MCF 10A (cell line): ENCODE measurements at regions of chr4 and their contacts with region 1.

Region 1: DNA sequence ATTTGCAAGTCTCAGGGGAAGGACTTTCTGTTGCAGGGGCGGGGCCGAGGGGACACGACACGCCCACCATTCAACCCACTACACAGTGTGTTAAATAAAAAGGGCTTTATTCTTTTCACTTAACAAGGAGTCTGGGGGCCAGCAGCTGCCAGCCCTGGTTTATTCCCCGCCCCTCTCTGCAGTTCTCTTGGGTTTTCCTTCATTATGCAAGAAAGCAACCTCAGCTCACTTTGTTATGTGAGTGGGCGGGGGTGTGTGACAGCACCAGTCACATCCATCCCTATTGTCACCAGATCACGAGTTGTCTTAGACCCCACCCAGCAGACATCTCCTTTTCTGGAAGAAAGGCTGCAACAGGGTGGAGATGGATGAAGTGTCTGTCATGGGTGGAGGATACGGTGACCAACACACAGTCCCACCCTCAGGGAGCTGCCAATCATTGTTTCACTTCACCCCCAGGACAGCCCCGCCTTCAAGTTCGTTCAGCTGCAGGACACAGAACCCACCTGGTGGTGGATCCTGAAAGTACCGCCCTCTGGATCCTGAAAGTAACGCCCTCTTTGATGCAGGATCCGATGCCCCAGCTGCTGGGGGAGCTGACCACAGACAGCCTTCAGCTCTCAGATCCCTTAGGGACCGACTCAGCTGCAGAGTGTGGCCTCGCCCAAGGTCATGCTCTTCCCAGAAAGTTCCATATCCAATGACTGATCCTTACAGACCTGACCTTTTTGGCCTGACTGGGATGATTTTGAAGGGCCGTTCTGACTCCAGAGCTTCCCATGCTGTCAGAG is 79.6 kb downstream of the SMIM20 start:
- DNase-seq: peak; percentile 17
- H3K4me3 Mint-ChIP-seq: no peak overlapping the region
- H3K27ac Mint-ChIP-seq: no peak overlapping the region
- H3K4me1 Mint-ChIP-seq: peaks cover 7% of the 10 kb centered on the region
- H3K27me3 Mint-ChIP-seq: no peaks in the 10 kb centered on the region
- CTCF ChIP-seq: peak; percentile 14

Region 2: GRCh38 chr4:25783943-25784342 is 209.6 kb before region 1 on chr4:
- CTCF ChIA-PET with region 1: no interaction called
- POLR2A ChIA-PET with region 1: no interaction called
- intact Hi-C with region 1: no loop called
- DNase-seq: no peak
- H3K4me3 Mint-ChIP-seq: no peak overlapping the region
- H3K27ac Mint-ChIP-seq: no peak overlapping the region
- H3K4me1 Mint-ChIP-seq: no peaks in the 10 kb centered on the region
- H3K27me3 Mint-ChIP-seq: no peaks in the 10 kb centered on the region
- CTCF ChIP-seq: no peak

Region 3: DNA sequence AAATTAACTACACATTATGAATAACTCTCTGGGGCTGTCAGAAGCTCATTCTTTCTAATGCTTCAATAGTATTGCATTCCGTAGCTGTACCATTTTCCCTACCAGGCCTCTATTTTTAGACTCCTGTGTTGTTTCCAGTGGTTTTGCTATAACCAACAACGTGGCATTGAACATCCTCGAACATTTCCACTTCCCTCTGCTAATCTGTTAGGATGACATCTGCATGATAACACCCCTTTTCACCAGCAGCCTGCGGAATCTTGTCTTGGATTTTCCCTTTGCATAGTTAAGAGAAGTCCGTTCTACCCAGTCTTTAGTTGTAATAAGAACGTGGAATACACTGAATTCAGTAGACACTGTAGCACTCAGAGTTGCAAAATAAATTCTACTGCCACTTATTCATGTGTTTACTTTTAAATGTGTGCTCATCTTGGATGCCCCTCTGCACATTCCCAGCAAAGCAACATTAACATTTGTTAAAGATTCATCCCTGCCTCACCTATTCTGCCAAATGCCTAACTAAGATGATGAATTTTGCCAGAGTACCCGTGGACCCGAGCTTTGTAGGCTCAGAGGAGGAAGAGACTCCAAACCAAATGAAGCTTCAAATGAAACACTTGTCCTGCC is 186.4 kb before region 1 on chr4:
- CTCF ChIA-PET with region 1: no interaction called
- POLR2A ChIA-PET with region 1: no interaction called
- intact Hi-C with region 1: no loop called
- DNase-seq: no peak
- H3K4me3 Mint-ChIP-seq: no peak overlapping the region
- H3K27ac Mint-ChIP-seq: no peak overlapping the region
- H3K4me1 Mint-ChIP-seq: no peaks in the 10 kb centered on the region
- H3K27me3 Mint-ChIP-seq: no peaks in the 10 kb centered on the region
- CTCF ChIP-seq: no peak

Region 4: DNA sequence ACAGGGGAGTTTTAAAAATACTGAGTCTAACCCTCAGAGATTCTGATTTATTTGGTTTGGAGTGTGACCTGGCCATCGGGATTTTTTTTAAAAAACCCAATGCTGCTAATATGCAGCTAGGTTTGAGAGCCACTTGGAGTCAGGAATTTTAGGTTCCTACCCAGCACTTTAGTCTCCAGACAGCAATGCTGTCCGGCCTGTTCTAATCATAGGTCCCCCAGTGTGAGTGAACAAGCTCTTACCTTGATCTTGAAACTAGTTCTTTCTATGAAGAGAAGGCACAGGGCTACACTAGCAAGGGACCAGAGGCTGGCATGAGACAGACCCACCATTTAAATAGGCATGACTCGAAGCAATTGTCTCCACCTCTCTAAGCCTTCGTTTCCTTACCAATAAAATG is 23.9 kb after region 1 on chr4:
- CTCF ChIA-PET with region 1: interaction called, 15 read pairs
- POLR2A ChIA-PET with region 1: interaction called, 3 read pairs
- intact Hi-C with region 1: no loop called
- DNase-seq: no peak
- H3K4me3 Mint-ChIP-seq: no peak overlapping the region
- H3K27ac Mint-ChIP-seq: no peak overlapping the region
- H3K4me1 Mint-ChIP-seq: peaks cover 30% of the 10 kb centered on the region
- H3K27me3 Mint-ChIP-seq: peaks cover 21% of the 10 kb centered on the region
- CTCF ChIP-seq: no peak

Region 5: GRCh38 chr4:26206339-26206738 is 212.7 kb after region 1 on chr4:
- CTCF ChIA-PET with region 1: no interaction called
- POLR2A ChIA-PET with region 1: no interaction called
- intact Hi-C with region 1: no loop called
- DNase-seq: peak; percentile 74
- H3K4me3 Mint-ChIP-seq: no peak overlapping the region
- H3K27ac Mint-ChIP-seq: no peak overlapping the region
- H3K4me1 Mint-ChIP-seq: peaks cover 15% of the 10 kb centered on the region
- H3K27me3 Mint-ChIP-seq: peaks cover 31% of the 10 kb centered on the region
- CTCF ChIP-seq: no peak

Region 6: DNA sequence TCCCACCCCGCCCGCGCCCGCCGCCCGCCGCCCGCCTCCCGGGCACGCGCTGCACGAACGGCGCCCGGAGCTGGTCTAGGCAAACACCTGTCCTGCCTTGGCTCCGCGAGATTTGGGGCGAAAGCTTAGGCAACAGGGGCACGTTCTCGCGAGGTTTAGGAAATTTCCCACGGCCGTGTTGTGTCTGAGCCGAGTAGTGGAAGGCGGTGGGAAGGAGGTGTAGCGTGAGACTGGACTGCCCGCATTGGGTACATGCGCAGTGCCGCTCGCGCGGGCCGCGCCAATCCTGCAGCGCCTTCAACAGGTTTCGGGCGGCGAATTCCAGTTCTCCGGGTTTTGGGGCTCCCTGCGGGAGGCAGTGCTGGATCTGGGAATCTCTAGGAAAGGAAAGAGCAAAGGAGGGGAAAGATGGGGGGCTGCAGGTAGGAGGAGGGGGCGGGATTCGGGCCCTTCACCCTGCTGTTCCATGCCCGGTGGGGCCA is 325.9 kb after region 1 on chr4:
- CTCF ChIA-PET with region 1: interaction called, 95 read pairs
- POLR2A ChIA-PET with region 1: no interaction called
- intact Hi-C with region 1: no loop called
- DNase-seq: peak; percentile 100
- H3K4me3 Mint-ChIP-seq: peak overlapping the region; percentile 87
- H3K27ac Mint-ChIP-seq: peak overlapping the region; percentile 94
- H3K4me1 Mint-ChIP-seq: peaks cover 16% of the 10 kb centered on the region
- H3K27me3 Mint-ChIP-seq: no peaks in the 10 kb centered on the region
- CTCF ChIP-seq: no peak

Region 7: DNA sequence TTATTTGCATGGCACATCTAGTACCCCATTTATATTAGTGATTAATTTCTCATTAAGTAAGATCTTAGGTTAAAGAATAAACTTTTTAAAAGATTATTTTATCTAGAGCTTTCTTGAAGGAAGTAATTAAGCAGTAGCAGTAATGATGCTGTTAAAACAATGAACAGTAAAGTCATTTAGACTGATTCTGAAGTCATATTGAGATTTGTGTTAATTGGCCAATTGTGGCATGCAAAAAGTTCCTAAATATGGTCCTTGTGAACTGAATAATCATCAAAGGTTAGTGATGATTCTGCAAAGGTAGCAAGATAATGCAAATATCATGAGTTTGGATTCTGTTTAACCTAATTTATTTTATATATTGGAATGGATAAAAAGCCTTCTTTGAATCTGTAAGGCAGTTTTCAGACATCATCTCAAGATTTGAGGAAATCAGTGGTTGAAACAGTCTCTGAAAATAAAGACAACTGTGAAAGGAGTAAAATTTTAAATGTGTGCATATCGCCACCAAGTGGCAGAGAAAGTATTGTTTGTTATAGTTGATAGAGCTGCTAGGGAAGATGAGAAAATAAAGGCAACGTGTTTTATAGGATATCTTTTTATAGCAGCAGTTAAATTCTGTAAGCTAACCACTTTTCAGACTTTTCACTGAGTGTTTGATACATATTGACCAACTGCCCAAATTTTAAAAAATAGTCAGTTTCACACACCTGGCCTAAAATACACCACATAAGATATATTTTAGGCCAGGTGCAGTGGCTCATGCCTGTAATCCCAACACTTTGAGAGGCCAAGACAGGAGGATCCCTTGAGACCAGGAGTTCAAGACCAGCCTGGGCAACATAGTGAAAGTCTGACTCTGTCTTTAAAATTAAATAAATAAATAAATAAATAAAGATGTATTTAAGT is 417.0 kb after region 1 on chr4:
- CTCF ChIA-PET with region 1: interaction called, 88 read pairs
- POLR2A ChIA-PET with region 1: interaction called, 4 read pairs
- intact Hi-C with region 1: loop called (anchors 1 kb)
- DNase-seq: peak; percentile 63
- H3K4me3 Mint-ChIP-seq: no peak overlapping the region
- H3K27ac Mint-ChIP-seq: no peak overlapping the region
- H3K4me1 Mint-ChIP-seq: peaks cover 10% of the 10 kb centered on the region
- H3K27me3 Mint-ChIP-seq: no peaks in the 10 kb centered on the region
- CTCF ChIP-seq: peak; percentile 48